Calu3 (cell line): ENCODE measurements at regions of chr4 and their contacts with region 1.

Region 1: GRCh38 chr4:153166716-153167501 is 37.3 kb upstream of the TRIM2 start:
- DNase-seq: peak; percentile 5
- H3K4me3 Mint-ChIP-seq: no peak overlapping the region
- H3K27ac Mint-ChIP-seq: peak overlapping the region; percentile 70
- H3K4me1 Mint-ChIP-seq: peaks cover 24% of the 10 kb centered on the region
- H3K27me3 Mint-ChIP-seq: no peaks in the 10 kb centered on the region
- CTCF ChIP-seq: no peak

Region 2: GRCh38 chr4:153028535-153028934 is 138.4 kb before region 1 on chr4:
- CTCF ChIA-PET with region 1: no interaction called
- intact Hi-C with region 1: no loop called
- DNase-seq: no peak
- H3K4me3 Mint-ChIP-seq: no peak overlapping the region
- H3K27ac Mint-ChIP-seq: no peak overlapping the region
- H3K4me1 Mint-ChIP-seq: no peaks in the 10 kb centered on the region
- H3K27me3 Mint-ChIP-seq: peaks cover 13% of the 10 kb centered on the region
- CTCF ChIP-seq: no peak

Region 3: GRCh38 chr4:153189016-153189801 is 22.3 kb after region 1 on chr4:
- CTCF ChIA-PET with region 1: no interaction called
- intact Hi-C with region 1: loop called (anchors 2 kb)
- DNase-seq: peak; percentile 33
- H3K4me3 Mint-ChIP-seq: peak overlapping the region; percentile 57
- H3K27ac Mint-ChIP-seq: peak overlapping the region; percentile 92
- H3K4me1 Mint-ChIP-seq: peaks cover 18% of the 10 kb centered on the region
- H3K27me3 Mint-ChIP-seq: no peaks in the 10 kb centered on the region
- CTCF ChIP-seq: no peak